ENCODE measurements at regions of chr9 and their contacts with region 1.

Region 1: GRCh38 chr9:114505187-114506081 is at the start of gene WHRN:
- DNase-seq: peak; percentile 85
- H3K4me3 Mint-ChIP-seq: peak within 1 kb of the TSS; percentile 78
- H3K27ac Mint-ChIP-seq: peak within 1 kb of the TSS; percentile 38
- H3K4me1 Mint-ChIP-seq: peaks cover 14% of the 10 kb centered on the region
- H3K27me3 Mint-ChIP-seq: peaks cover 64% of the 10 kb centered on the region
- total RNA-seq, gene WHRN: 2.8 and 2.9 TPM in 2 replicates

Region 2: GRCh38 chr9:114317665-114318357 is 187.6 kb before region 1 on chr9:
- intact Hi-C with region 1: no loop called
- DNase-seq: no peak
- H3K4me3 Mint-ChIP-seq: no peak overlapping the region
- H3K27ac Mint-ChIP-seq: no peak overlapping the region
- H3K4me1 Mint-ChIP-seq: peaks cover 8% of the 10 kb centered on the region
- H3K27me3 Mint-ChIP-seq: no peaks in the 10 kb centered on the region

Region 3: GRCh38 chr9:114339130-114339908 is 166.1 kb before region 1 on chr9:
- intact Hi-C with region 1: loop called (anchors 5 kb)
- DNase-seq: peak; percentile 37
- H3K4me3 Mint-ChIP-seq: no peak overlapping the region
- H3K27ac Mint-ChIP-seq: peak overlapping the region; percentile 0
- H3K4me1 Mint-ChIP-seq: peaks cover 9% of the 10 kb centered on the region
- H3K27me3 Mint-ChIP-seq: no peaks in the 10 kb centered on the region

Region 4: DNA sequence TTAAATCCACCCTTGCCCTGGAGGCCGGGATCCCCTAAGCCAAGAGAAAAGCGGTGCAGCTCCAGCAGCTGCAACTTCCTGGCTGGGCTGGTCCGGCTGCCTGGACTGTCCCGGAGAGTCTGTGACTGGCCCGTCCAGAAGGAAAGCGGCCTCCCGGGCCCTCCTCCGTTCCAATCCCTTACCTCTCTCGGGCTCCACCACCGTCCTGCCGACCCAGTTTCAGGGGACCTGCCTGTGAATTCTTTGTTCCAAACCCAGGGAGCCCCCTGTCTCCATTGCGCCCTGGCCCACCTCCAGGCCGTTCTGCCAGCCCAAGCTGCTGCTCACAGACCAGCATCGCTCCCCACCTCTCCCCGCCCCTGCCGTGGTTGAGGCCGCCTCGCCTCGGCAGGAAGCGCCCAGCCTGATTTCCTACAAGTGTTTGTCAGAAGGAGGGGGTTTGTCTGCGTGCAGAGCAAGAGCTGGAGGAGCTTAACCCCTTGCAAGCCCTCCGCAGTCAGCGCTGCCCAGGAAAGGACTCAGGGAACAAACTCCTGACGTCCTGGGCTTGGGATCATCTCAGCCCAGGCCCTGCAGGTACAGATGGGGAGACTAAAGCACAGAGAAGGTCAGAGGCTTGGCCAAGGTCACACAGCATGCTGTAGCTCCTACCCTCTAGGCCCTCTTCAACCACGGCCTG is 117.6 kb before region 1 on chr9 and contains the start of gene AKNA:
- intact Hi-C with region 1: no loop called
- DNase-seq: peak; percentile 80
- H3K4me3 Mint-ChIP-seq: peak within 1 kb of the TSS; percentile 99
- H3K27ac Mint-ChIP-seq: peak within 1 kb of the TSS; percentile 99
- H3K4me1 Mint-ChIP-seq: peaks cover 66% of the 10 kb centered on the region
- H3K27me3 Mint-ChIP-seq: no peaks in the 10 kb centered on the region
- total RNA-seq, gene AKNA: 152 TPM in 2 replicates

Region 5: GRCh38 chr9:114405294-114406034 is 100.0 kb before region 1 on chr9:
- intact Hi-C with region 1: loop called (anchors 1 kb)
- DNase-seq: peak; percentile 71
- H3K4me3 Mint-ChIP-seq: no peak overlapping the region
- H3K27ac Mint-ChIP-seq: no peak overlapping the region
- H3K4me1 Mint-ChIP-seq: peaks cover 6% of the 10 kb centered on the region
- H3K27me3 Mint-ChIP-seq: no peaks in the 10 kb centered on the region

Region 6: DNA sequence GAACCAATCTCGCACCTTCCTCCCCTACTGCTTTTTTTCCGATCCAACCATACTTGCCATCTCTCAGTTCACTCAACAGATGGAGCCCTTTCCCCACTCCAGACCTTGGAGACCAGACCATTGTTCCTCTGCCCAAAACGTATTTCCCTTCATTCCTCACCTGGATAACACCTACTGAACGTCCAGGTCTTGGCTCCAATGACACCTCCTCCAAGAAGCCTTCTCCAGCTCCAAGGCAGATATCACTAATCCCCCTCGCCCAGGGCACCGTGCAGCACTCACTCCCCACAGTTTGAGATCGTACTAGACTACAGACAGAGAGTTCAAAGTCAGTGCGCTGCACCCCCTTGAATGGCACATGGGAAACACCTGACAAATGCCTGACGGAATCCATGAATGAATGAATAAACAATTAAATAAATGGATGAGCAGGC is 70.5 kb before region 1 on chr9:
- intact Hi-C with region 1: loop called (anchors 10 kb)
- DNase-seq: no peak
- H3K4me3 Mint-ChIP-seq: no peak overlapping the region
- H3K27ac Mint-ChIP-seq: no peak overlapping the region
- H3K4me1 Mint-ChIP-seq: peaks cover 3% of the 10 kb centered on the region
- H3K27me3 Mint-ChIP-seq: peaks cover 6% of the 10 kb centered on the region

Region 7: DNA sequence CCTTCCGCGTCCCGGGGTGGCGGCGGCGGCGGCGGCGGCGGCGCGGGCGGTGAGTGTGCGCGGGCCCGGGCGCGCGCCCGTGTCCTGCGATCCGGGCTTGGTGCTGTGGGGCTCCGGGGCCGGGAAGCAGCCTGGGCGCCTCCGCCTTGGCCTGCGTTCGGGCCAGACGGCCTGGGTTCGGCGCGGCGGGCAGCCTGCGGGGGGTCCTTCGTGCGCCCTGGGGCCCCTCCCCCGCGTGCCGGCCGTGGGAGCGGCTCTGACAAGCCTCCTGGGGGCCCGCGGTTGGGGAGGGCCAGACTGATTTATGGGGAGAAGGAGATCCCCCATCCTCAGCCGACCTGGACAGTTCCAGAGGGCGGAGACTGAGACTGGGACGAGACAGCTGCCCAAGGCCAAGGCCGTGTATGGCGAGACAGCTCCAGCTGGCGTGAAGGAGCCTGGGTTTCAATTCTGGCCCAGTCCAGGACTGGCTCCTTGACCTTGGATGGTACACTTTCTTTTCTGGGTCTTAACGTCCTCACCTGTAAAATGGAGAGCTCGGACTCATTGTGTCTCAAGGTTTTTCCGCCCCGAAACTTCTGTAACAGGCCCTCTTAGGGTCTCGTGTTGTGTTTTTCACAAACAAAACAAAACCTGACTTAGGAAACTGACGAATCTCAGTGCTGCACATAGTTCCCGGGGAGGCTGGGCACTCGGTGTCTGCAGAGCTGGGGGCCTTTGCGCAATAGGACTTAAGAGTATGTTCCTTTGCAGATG is 106.3 kb after region 1 on chr9:
- intact Hi-C with region 1: loop called (anchors 1 kb)
- DNase-seq: peak; percentile 14
- H3K4me3 Mint-ChIP-seq: peak overlapping the region; percentile 83
- H3K27ac Mint-ChIP-seq: peak overlapping the region; percentile 86
- H3K4me1 Mint-ChIP-seq: peaks cover 44% of the 10 kb centered on the region
- H3K27me3 Mint-ChIP-seq: no peaks in the 10 kb centered on the region

Region 8: DNA sequence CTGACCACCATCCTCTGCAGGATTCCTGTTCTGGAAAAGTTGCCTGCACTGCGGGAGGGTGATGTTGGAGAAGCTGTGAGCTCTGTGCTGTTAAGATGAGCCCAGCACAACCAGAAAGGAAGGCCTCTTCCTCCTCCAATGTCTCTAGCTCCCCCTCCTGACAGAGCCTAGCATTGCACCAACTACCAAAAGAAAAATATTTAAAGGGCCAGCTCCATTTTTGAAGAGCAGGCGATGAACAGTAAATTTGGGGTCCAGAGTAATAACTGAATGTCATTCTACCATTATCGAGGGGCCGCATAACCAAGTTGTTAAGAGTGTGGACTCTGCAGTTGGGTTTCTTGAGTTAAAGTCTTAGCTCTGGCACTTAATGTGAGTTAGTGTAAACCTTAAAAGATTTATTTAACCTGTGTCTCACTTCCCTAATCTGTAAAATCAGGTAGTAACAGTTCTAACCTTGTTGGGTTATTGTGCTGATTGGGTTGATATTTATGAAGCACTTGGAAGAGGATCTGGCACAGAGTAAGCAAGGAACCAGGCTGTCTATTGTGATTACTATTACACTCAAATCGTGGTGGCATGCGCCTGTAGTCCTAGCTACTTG is 148.2 kb after region 1 on chr9:
- intact Hi-C with region 1: loop called (anchors 5 kb)
- DNase-seq: peak; percentile 73
- H3K4me3 Mint-ChIP-seq: no peak overlapping the region
- H3K27ac Mint-ChIP-seq: no peak overlapping the region
- H3K4me1 Mint-ChIP-seq: peaks cover 21% of the 10 kb centered on the region
- H3K27me3 Mint-ChIP-seq: no peaks in the 10 kb centered on the region